Activated CD4-positive, alpha-beta T cell treated with anti-CD3 and anti-CD28 coated beads for 36 hours (primary cell): ENCODE measurements at regions of chr11 and their contacts with region 1.

Region 1: GRCh38 chr11:95150946-95151684 is 61.5 kb downstream of the ENDOD1 start:
- DNase-seq: peak; percentile 96
- ATAC-seq: peak; percentile 88
- H3K4me3 Mint-ChIP-seq: peak overlapping the region; percentile 83
- H3K27ac Mint-ChIP-seq: peak overlapping the region; percentile 87
- H3K4me1 Mint-ChIP-seq: peaks cover 36% of the 10 kb centered on the region
- H3K27me3 Mint-ChIP-seq: peaks cover 3% of the 10 kb centered on the region

Region 2: GRCh38 chr11:94623120-94623735 is 527.9 kb before region 1 on chr11:
- CTCF ChIA-PET with region 1: no interaction called
- POLR2A ChIA-PET with region 1: no interaction called
- intact Hi-C with region 1: loop called in 1 of 2 experiments (anchors 1 kb)
- DNase-seq: peak; percentile 70
- ATAC-seq: peak; percentile 93
- H3K4me3 Mint-ChIP-seq: no peak overlapping the region
- H3K27ac Mint-ChIP-seq: no peak overlapping the region
- H3K4me1 Mint-ChIP-seq: peaks cover 2% of the 10 kb centered on the region
- H3K27me3 Mint-ChIP-seq: peaks cover 2% of the 10 kb centered on the region

Region 3: DNA sequence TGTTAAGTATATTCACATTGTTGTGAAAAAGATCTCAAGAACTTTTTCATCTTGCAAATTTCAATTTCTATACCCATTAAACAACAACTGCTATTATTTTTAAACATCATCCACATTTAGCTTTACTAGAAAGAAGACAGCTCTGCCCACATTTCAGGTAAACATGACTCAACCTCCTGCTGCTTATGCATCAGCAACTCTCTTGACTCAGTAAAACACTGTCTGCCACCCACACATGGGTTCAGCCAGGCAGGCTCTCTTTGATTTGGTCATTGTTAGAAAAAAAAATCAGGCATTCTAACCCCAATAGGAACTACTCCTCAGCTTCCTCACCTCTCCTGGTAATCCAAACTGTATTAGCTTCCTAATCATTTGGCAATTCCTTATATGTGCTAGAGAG is 66.6 kb before region 1 on chr11:
- CTCF ChIA-PET with region 1: interaction called, 9 read pairs
- POLR2A ChIA-PET with region 1: no interaction called
- intact Hi-C with region 1: loop called in 1 of 2 experiments (anchors 1 kb)
- DNase-seq: peak; percentile 83
- ATAC-seq: peak; percentile 82
- H3K4me3 Mint-ChIP-seq: no peak overlapping the region
- H3K27ac Mint-ChIP-seq: peak overlapping the region; percentile 87
- H3K4me1 Mint-ChIP-seq: peaks cover 42% of the 10 kb centered on the region
- H3K27me3 Mint-ChIP-seq: no peaks in the 10 kb centered on the region

Region 4: GRCh38 chr11:95231127-95231880 is 80.2 kb after region 1 on chr11 and contains the start of gene SESN3:
- CTCF ChIA-PET with region 1: interaction called, 15 read pairs
- POLR2A ChIA-PET with region 1: interaction called, 4 read pairs
- intact Hi-C with region 1: loop called (anchors 1 to 2 kb)
- DNase-seq: peak; percentile 99
- ATAC-seq: peak; percentile 93
- H3K4me3 Mint-ChIP-seq: no peak within 1 kb of the TSS
- H3K27ac Mint-ChIP-seq: peak within 1 kb of the TSS; percentile 84
- H3K4me1 Mint-ChIP-seq: peaks cover 46% of the 10 kb centered on the region
- H3K27me3 Mint-ChIP-seq: no peaks in the 10 kb centered on the region
- total RNA-seq, gene SESN3: 8.4 to 12.3 TPM

Region 5: DNA sequence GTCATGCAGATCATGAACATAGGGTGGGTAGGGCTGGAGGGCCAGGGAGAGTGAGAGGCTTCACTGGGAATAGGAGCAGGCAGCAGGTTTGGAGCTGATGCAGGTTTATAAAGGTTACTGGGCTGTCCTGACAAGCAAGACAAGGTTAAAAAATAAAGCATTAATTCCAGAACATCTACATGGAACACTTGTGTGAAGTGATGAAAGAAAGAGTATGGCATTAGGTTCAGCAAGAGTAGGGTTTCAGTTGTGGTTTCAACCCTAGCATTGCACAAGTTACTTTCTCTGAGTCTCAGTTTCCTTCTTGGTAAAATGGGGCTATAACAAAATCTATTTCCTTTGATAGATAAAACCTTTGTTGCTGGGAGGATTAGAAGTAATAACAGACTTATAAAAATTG is 194.5 kb after region 1 on chr11:
- CTCF ChIA-PET with region 1: no interaction called
- POLR2A ChIA-PET with region 1: interaction called, 3 read pairs
- intact Hi-C with region 1: loop called in 1 of 2 experiments (anchors 5 kb)
- DNase-seq: no peak
- ATAC-seq: peak; percentile 88
- H3K4me3 Mint-ChIP-seq: no peak overlapping the region
- H3K27ac Mint-ChIP-seq: no peak overlapping the region
- H3K4me1 Mint-ChIP-seq: peaks cover 17% of the 10 kb centered on the region
- H3K27me3 Mint-ChIP-seq: no peaks in the 10 kb centered on the region

Region 6: DNA sequence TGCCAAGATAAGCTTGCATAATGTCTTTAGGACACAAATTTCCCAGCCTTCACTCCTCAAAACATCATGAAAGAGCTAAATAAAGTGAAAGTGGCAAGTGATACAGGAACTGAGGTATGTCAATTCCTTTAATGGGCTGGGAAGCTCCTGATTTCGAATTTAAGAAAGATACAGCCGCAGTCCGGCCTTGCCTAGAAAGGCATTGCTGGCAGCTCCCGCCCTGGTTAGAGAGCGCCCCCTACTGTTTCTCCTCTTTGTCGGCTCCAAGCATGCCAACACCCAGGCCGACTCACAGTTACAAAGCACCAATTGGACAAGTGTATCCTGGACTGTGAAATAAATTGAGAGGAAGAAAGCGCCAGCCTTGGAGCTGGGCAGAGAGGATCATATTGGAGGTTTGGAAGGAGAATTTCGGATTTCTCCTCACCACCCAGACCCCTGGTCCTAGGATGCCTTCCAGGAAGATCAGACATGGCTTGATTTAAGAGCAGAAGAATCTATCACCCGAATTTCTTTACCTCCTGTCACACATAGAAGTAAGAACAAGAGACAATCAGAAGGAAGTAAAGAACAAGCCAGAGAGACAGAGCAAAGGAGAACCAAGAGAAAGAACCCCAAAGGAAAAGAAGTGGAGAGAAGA is 554.5 kb after region 1 on chr11:
- CTCF ChIA-PET with region 1: interaction called, 129 read pairs
- POLR2A ChIA-PET with region 1: no interaction called
- intact Hi-C with region 1: loop called (anchors 1 kb)
- DNase-seq: peak; percentile 92
- ATAC-seq: peak; percentile 83
- H3K4me3 Mint-ChIP-seq: no peak overlapping the region
- H3K27ac Mint-ChIP-seq: no peak overlapping the region
- H3K4me1 Mint-ChIP-seq: peaks cover 12% of the 10 kb centered on the region
- H3K27me3 Mint-ChIP-seq: no peaks in the 10 kb centered on the region

Region 7: GRCh38 chr11:95790123-95790932 is 639.2 kb after region 1 on chr11 and contains the start of gene CEP57:
- CTCF ChIA-PET with region 1: interaction called, 5 read pairs
- POLR2A ChIA-PET with region 1: interaction called, 3 read pairs
- intact Hi-C with region 1: loop called (anchors 1 kb)
- DNase-seq: peak; percentile 98
- ATAC-seq: peak; percentile 67
- H3K4me3 Mint-ChIP-seq: peak within 1 kb of the TSS; percentile 99
- H3K27ac Mint-ChIP-seq: peak within 1 kb of the TSS; percentile 100
- H3K4me1 Mint-ChIP-seq: peaks cover 53% of the 10 kb centered on the region
- H3K27me3 Mint-ChIP-seq: no peaks in the 10 kb centered on the region
- total RNA-seq, gene CEP57: 101 to 134 TPM

Region 8: GRCh38 chr11:96763244-96763643 is 1612.1 kb after region 1 on chr11:
- CTCF ChIA-PET with region 1: no interaction called
- POLR2A ChIA-PET with region 1: no interaction called
- intact Hi-C with region 1: no loop called
- DNase-seq: no peak
- ATAC-seq: no peak
- H3K4me3 Mint-ChIP-seq: no peak overlapping the region
- H3K27ac Mint-ChIP-seq: no peak overlapping the region
- H3K4me1 Mint-ChIP-seq: no peaks in the 10 kb centered on the region
- H3K27me3 Mint-ChIP-seq: no peaks in the 10 kb centered on the region